Naive thymus-derived CD8-positive, alpha-beta T cell (primary cell): ENCODE measurements at regions of chr2 and their contacts with region 1.

Region 1: DNA sequence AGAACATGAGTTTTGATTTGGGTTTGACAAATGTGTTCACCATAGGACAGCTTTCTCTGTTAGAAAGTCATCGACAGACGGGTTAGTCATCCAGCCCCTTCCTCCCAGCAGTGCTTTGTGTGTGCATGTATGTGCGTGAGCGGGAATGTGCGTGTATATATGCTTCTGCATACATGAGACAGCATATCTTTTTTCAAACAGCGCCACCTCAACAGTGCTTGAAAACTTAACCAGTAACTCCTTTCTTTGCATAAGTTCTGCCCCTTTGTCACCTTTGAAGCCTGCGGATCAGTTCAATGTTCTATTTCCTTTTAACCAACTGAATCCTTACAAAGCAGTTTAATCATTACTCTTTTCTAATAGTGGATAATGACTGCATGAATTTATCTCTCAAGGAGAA is 351.4 kb downstream of the LPIN1 start:
- DNase-seq: no peak
- ATAC-seq: no peak
- H3K4me3 Mint-ChIP-seq: no peak overlapping the region
- H3K27ac Mint-ChIP-seq: no peak overlapping the region
- H3K4me1 Mint-ChIP-seq: peaks cover 2 to 18% (median 6%) of the 10 kb centered on the region in 4 donors
- H3K27me3 Mint-ChIP-seq: no peaks in the 10 kb centered on the region

Region 2: DNA sequence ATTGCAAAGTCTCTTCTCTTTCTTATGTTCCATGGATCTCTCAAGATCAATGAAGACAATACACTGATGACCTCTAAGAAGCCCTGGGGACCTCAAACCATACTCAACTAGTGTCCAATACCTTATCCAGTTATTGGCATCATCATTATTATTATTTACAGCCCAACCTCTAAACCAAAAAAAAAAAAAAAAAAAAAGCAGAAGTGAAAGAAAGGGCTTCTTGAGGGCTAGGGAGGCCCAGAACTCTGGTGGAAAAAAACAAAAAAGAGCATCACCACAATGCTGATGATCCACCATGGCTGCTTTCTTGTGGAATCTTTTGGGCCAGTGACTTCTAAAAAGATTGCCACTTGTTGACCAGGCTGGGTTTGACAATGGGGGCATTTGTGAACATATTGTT is 26.5 kb before region 1 on chr2:
- POLR2A ChIA-PET with region 1: no interaction called
- DNase-seq: no peak
- ATAC-seq: no peak
- H3K4me3 Mint-ChIP-seq: no peak overlapping the region
- H3K27ac Mint-ChIP-seq: peak overlapping the region in 2 of 10 donors; percentile 16 to 42
- H3K4me1 Mint-ChIP-seq: peaks cover 5 to 45% (median 12%) of the 10 kb centered on the region in 4 donors
- H3K27me3 Mint-ChIP-seq: no peaks in the 10 kb centered on the region

Region 3: DNA sequence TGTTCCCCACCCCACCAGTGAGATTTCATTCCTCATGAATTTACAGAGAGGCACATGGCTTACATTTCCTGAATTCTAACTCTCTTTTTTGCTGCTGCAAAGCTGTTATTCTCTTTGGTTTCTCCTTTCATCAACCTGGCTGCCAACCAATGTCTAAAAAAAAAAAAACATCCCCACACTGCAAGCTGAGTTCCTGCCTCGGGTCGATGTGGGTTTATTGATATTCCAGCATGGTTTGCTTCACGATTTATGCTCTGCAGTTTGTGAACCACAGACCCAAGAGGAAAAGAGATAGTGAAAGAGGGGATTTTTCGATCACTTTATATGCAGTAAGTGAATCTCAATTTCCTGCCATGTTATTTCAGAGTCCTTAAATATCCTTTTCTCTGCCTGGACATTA is 12.2 kb after region 1 on chr2:
- POLR2A ChIA-PET with region 1: interaction called, 10 read pairs
- DNase-seq: peak in 7 of 10 donors; percentile 4 to 77 (median 38)
- ATAC-seq: peak; percentile 88 to 93
- H3K4me3 Mint-ChIP-seq: peak overlapping the region; percentile 35 to 81 (median 68)
- H3K27ac Mint-ChIP-seq: peak overlapping the region; percentile 32 to 93 (median 72)
- H3K4me1 Mint-ChIP-seq: peaks cover 25 to 59% (median 51%) of the 10 kb centered on the region in 4 donors
- H3K27me3 Mint-ChIP-seq: no peaks in the 10 kb centered on the region